ENCODE measurements at regions of chr1 and their contacts with region 1.

Region 1: GRCh38 chr1:228139944-228140656 is at the start of gene GUK1:
- DNase-seq: peak; percentile 100
- ATAC-seq: peak; percentile 95 to 96
- total RNA-seq, gene GUK1: 153 to 185 TPM

Region 2: DNA sequence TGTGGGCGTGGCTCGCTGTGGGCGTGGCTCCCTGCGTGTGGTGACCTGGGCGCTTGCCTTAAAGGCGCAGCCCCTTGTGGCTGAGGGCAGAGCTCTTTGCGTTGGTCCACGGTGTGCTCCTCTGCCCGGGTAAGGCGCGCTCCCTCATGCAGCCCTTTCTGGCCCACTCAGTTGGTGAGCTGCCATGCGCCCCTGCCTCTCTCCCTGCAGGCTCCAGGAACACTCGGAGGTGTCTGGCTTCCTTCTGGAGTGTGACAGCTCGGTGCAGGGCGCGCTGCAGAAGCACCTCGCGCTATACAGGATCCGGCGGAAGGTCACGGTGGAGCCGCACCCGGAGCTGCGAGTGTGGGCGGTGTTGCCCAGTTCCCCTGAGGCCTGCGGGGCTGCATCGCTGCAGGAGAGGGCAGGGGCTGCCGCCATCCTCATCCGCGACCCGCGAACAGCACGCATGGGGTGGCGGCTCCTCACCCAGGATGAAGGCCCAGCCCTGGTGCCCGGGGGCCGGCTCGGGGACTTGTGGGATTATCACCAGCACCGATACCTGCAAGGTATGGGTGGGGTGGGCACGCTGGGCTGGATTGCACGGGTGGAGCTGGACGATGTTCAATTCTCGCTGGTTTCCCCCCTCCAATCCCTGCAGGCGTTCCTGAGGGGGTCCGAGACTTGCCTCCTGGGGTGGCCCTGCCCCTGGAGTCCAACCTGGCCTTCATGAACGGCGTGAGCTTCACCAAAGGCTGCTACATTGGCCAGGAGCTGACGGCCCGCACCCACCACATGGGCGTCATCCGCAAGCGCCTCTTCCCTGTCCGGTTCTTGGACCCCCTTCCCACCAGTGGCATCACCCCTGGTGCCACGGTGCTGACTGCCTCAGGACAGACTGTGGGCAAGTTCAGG is 34.6 kb after region 1 on chr1:
- intact Hi-C with region 1: no loop called
- DNase-seq: peak; percentile 37
- ATAC-seq: peak in 1 of 2 donors; percentile 18

Region 3: DNA sequence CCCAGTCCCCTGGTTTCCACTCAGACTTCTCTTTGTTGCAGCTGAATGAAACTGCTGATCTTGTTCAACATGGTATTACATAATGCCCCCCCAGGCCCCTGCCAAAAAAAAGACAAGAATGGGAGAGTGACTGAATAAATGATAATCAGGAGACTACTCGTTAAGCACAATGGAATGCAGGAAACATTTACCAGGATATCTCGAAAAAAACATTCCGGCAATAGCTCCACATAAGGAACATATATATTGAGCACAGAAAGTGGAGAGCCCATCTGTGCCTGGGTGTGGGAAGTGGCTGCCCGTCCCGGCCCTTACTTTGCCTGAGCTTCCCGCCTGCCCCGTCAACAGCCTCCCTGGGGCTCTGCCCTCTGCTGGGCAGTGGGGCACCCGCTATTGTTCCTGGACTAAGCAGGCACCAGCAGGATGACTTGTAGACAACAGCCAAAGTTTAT is 253.2 kb after region 1 on chr1:
- intact Hi-C with region 1: loop called in 1 of 2 experiments (anchors 10 kb)
- DNase-seq: no peak
- ATAC-seq: peak; percentile 82 to 85

Measured in left cardiac atrium (tissue), 4 donors.